ENCODE measurements at regions of chr4 and their contacts with region 1.

Region 1: DNA sequence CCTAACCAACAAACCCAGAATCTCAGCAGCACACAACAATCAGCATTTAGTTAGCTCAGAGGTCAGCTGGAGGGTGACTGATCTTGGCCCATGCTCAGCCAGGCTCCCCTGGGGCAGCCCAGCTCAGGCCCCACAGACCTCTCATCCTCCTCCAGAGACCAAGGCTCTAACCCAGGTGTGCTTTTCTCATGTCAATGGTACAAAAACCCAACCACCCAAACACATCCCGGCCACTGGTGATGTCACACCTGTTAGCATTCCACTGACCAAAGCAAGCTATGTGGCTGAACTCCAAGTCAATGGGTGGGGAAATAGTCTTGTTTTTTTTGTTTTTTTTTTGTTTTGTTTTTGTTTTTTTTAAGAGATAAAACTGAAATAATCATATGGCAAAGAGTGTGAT is 77.5 kb downstream of the CYTL1 start:
- DNase-seq: no peak
- ATAC-seq: no peak
- H3K4me3 ChIP-seq: no peak overlapping the region
- H3K4me3 Mint-ChIP-seq: peak overlapping the region; percentile 20
- H3K27ac ChIP-seq: no peak overlapping the region
- H3K27ac Mint-ChIP-seq: peak overlapping the region; percentile 74
- H3K4me1 ChIP-seq: peaks cover 36 to 40% of the 10 kb centered on the region in 2 donors
- H3K4me1 Mint-ChIP-seq: peaks cover 63% of the 10 kb centered on the region
- H3K27me3 ChIP-seq: no peaks in the 10 kb centered on the region
- H3K27me3 Mint-ChIP-seq: no peaks in the 10 kb centered on the region
- CTCF ChIP-seq: no peak

Region 2: DNA sequence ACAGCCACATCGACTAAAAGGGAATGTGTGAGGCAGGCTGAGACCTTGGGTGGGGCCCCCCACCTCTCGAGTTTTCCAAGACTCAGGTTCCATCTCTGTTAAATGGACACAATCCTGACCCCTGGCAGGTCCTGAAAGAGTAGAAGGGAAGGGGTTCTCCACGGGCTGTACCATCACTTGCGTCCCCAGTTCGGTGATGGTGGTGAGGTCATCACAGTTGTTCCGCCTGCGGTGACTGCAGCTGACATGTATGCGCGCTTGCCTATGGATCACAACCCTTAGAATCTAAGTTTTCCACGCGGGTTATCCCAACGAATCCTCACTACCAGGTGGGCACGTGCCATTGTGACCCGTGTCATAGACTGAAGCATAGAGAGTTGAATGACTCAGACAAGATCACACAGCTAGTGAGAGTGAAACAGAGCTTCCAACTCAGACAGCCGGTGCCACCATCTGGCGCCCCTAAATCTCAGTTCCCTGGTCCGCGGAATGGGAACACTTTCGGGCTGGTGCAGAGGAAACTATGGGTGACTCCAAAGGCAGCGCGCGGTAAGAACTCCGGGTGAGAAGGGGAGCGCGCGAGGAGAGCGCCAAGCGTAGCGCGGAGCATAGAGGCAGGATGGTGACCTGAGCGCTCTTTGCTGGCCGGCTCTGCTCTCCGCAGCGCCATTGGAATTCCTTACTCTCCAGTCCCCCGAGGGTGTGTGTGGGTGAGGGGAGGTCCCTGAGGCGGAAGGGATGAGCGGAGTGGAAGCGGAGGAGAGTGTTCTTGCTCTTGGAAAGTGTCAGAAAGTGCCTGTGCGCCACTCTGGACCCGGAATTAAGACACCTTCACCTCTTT is 71.8 kb before region 1 on chr4:
- CTCF ChIA-PET with region 1: interaction called, 3 read pairs
- POLR2A ChIA-PET with region 1: interaction called, 3 read pairs
- intact Hi-C with region 1: loop called (anchors 5 kb)
- DNase-seq: peak; percentile 50
- ATAC-seq: no peak
- H3K4me3 ChIP-seq: no peak overlapping the region
- H3K4me3 Mint-ChIP-seq: peak overlapping the region; percentile 39
- H3K27ac ChIP-seq: no peak overlapping the region
- H3K27ac Mint-ChIP-seq: peak overlapping the region; percentile 82
- H3K4me1 ChIP-seq: peaks cover 36 to 74% of the 10 kb centered on the region in 2 donors
- H3K4me1 Mint-ChIP-seq: peaks cover 31% of the 10 kb centered on the region
- H3K27me3 ChIP-seq: peaks cover 0 to 100% (median 77%) of the 10 kb centered on the region in 4 experiments
- H3K27me3 Mint-ChIP-seq: peaks cover 71% of the 10 kb centered on the region
- CTCF ChIP-seq: no peak

Region 3: DNA sequence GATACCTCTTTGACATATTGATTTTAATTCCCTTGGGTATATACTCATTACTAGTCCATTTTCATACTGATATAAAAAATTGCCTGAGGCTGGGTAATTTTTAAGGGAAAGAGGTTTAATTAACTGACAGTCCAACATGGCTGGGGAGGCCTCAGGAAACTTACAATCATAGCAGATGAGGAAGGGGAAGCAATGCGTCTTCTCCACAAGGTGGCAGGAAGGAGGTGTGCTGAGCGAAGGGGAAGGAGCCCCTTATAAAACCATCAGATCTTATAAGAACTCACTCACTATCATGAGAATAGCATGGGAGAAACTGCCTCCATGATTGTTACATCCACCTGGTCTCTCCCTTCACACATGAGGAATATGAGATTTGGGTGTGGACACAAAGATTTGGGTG is 39.9 kb before region 1 on chr4:
- CTCF ChIA-PET with region 1: no interaction called
- POLR2A ChIA-PET with region 1: no interaction called
- intact Hi-C with region 1: loop called (anchors 5 kb)
- DNase-seq: peak; percentile 42
- ATAC-seq: peak; percentile 31
- H3K4me3 ChIP-seq: no peak overlapping the region
- H3K4me3 Mint-ChIP-seq: no peak overlapping the region
- H3K27ac ChIP-seq: no peak overlapping the region
- H3K27ac Mint-ChIP-seq: no peak overlapping the region
- H3K4me1 ChIP-seq: no peaks in the 10 kb centered on the region
- H3K4me1 Mint-ChIP-seq: no peaks in the 10 kb centered on the region
- H3K27me3 ChIP-seq: peaks cover 0 to 2% (median 0%) of the 10 kb centered on the region in 4 experiments
- H3K27me3 Mint-ChIP-seq: peaks cover 18% of the 10 kb centered on the region
- CTCF ChIP-seq: peak; percentile 35

Region 4: GRCh38 chr4:4995103-4995907 is 53.6 kb after region 1 on chr4:
- CTCF ChIA-PET with region 1: interaction called, 21 read pairs
- POLR2A ChIA-PET with region 1: interaction called, 6 read pairs
- intact Hi-C with region 1: loop called (anchors 5 kb)
- DNase-seq: peak; percentile 68
- ATAC-seq: peak; percentile 65
- H3K4me3 ChIP-seq: no peak overlapping the region
- H3K4me3 Mint-ChIP-seq: no peak overlapping the region
- H3K27ac ChIP-seq: no peak overlapping the region
- H3K27ac Mint-ChIP-seq: peak overlapping the region; percentile 4
- H3K4me1 ChIP-seq: peaks cover 7 to 9% of the 10 kb centered on the region in 2 donors
- H3K4me1 Mint-ChIP-seq: peaks cover 14% of the 10 kb centered on the region
- H3K27me3 ChIP-seq: peaks cover 0 to 7% (median 3%) of the 10 kb centered on the region in 4 experiments
- H3K27me3 Mint-ChIP-seq: peaks cover 35% of the 10 kb centered on the region
- CTCF ChIP-seq: peak; percentile 86

Measured in B cell (primary cell).